Ovary (tissue), 10 donors: ENCODE measurements at regions of chr7 and their contacts with region 1.

Region 1: GRCh38 chr7:29105752-29106668 is 40.3 kb downstream of the CPVL start:
- DNase-seq: peak in 2 of 5 donors; percentile 15 to 50
- H3K4me3 ChIP-seq: no peak overlapping the region
- H3K27ac ChIP-seq: no peak overlapping the region
- H3K4me1 ChIP-seq: no peaks in the 10 kb centered on the region
- H3K27me3 ChIP-seq: no peaks in the 10 kb centered on the region
- CTCF ChIP-seq: peak; percentile 59 to 78 (median 70)
- EP300 ChIP-seq: no peak
- POLR2A ChIP-seq: no peak

Region 2: DNA sequence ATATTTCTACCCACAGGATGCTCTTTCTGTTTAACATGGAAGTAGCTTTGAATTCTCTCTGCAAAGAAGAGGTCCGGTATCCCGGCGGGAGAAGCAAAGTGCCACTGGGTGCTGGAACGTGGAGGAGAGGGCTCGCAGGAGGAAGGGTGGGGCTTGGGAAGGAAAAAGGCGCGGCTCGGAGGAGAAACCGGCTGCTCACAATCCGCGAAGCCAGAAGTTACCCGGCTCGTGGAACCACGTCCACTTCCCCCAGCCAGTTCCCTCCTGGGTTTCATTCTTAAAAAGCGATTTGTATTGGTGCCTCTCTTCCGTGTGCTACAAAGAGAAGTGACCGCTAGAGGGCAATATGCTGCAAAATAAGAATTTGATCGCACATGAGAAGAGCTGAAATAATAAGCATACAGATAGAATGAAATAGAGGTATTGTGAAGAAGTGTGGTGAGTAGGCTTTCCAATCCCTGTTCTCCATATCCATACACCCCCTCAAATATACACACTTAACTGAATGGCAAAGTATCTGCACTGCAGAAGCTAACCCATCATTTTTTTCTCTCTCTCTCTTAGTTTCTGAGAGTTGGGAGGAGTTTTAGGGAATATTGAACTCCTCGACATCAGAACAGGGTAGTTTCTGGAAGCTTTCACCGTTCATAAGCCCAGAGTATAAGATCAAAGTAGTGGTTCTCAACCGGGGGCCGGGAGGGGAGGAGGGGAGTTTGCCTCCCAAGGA is 179.0 kb before region 1 on chr7:
- intact Hi-C with region 1: loop called in 3 of 4 experiments (anchors 2 to 5 kb)
- DNase-seq: peak; percentile 54 to 73 (median 67)
- H3K4me3 ChIP-seq: peak overlapping the region; percentile 59
- H3K27ac ChIP-seq: no peak overlapping the region
- H3K4me1 ChIP-seq: no peaks in the 10 kb centered on the region
- H3K27me3 ChIP-seq: no peaks in the 10 kb centered on the region
- CTCF ChIP-seq: peak; percentile 37 to 75 (median 64)
- EP300 ChIP-seq: no peak
- POLR2A ChIP-seq: no peak

Region 3: GRCh38 chr7:28955718-28956619 is 150.0 kb before region 1 on chr7:
- intact Hi-C with region 1: loop called in 2 of 4 experiments (anchors 10 kb)
- DNase-seq: peak; percentile 54 to 82 (median 76)
- H3K4me3 ChIP-seq: peak overlapping the region; percentile 48
- H3K27ac ChIP-seq: no peak overlapping the region
- H3K4me1 ChIP-seq: peaks cover 14% of the 10 kb centered on the region
- H3K27me3 ChIP-seq: no peaks in the 10 kb centered on the region
- CTCF ChIP-seq: peak in 2 of 3 donors; percentile 30 to 52
- EP300 ChIP-seq: no peak
- POLR2A ChIP-seq: no peak

Region 4: GRCh38 chr7:29017713-29018112 is 88.3 kb before region 1 on chr7:
- intact Hi-C with region 1: no loop called
- DNase-seq: no peak
- H3K4me3 ChIP-seq: no peak overlapping the region
- H3K27ac ChIP-seq: no peak overlapping the region
- H3K4me1 ChIP-seq: peaks cover 2% of the 10 kb centered on the region
- H3K27me3 ChIP-seq: no peaks in the 10 kb centered on the region
- CTCF ChIP-seq: no peak
- EP300 ChIP-seq: no peak
- POLR2A ChIP-seq: no peak

Region 5: GRCh38 chr7:29228289-29229011 is 122.4 kb after region 1 on chr7:
- intact Hi-C with region 1: no loop called
- DNase-seq: no peak
- H3K4me3 ChIP-seq: no peak overlapping the region
- H3K27ac ChIP-seq: no peak overlapping the region
- H3K4me1 ChIP-seq: no peaks in the 10 kb centered on the region
- H3K27me3 ChIP-seq: no peaks in the 10 kb centered on the region
- CTCF ChIP-seq: no peak
- EP300 ChIP-seq: no peak
- POLR2A ChIP-seq: no peak

Region 6: DNA sequence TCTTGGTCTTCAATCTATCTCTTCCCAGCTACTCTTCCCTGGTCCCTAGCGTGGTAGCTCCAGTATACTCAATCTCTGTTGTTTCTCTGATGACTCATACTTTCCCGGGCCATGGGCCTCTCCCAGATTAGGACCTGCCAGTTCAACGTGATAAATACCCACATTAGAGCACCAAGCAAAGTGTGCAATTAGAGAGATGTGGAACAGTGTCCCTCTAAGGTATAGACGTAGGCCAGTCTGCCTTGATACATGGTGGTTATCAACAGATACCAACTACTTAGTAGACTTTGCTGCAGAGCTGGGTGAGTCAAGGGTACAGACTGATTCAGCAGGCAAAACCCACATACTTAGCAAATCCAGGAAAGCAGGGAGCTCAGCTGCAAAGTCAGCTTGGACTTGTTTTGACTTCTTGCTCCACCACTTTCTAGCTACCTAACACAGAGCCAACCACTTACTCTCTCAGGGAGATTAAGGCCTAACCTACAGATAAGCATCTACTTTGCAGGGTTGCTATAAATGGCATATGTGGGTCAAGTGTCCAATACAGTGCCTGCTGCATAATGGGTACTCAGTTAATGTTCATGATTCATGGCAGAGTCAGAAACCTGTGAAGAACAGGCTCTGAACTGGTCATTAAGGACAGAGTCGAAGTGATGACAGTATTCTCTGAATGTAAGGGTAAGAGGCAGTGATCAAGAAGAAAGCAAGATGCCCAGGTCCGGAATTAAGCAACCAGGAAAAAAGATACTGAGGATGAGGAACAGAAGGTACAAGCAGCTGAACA is 264.7 kb after region 1 on chr7:
- intact Hi-C with region 1: no loop called
- DNase-seq: peak in 1 of 5 donors; percentile 24
- H3K4me3 ChIP-seq: no peak overlapping the region
- H3K27ac ChIP-seq: no peak overlapping the region
- H3K4me1 ChIP-seq: no peaks in the 10 kb centered on the region
- H3K27me3 ChIP-seq: no peaks in the 10 kb centered on the region
- CTCF ChIP-seq: no peak
- EP300 ChIP-seq: no peak
- POLR2A ChIP-seq: no peak

Region 7: GRCh38 chr7:29815181-29816105 is 709.4 kb after region 1 on chr7:
- intact Hi-C with region 1: no loop called
- DNase-seq: no peak
- H3K4me3 ChIP-seq: no peak overlapping the region
- H3K27ac ChIP-seq: peak overlapping the region in 1 of 2 donors; percentile 23
- H3K4me1 ChIP-seq: peaks cover 11% of the 10 kb centered on the region
- H3K27me3 ChIP-seq: no peaks in the 10 kb centered on the region
- CTCF ChIP-seq: no peak
- EP300 ChIP-seq: no peak
- POLR2A ChIP-seq: no peak